Aorta (tissue), 5 donors: ENCODE measurements at regions of chr1 and their contacts with region 1.

Region 1: GRCh38 chr1:198096390-198096789 is 60.4 kb upstream of the NEK7 start:
- DNase-seq: no peak
- ATAC-seq: no peak
- H3K4me3 ChIP-seq: no peak overlapping the region
- H3K27ac ChIP-seq: no peak overlapping the region
- H3K4me1 ChIP-seq: no peaks in the 10 kb centered on the region
- H3K27me3 ChIP-seq: no peaks in the 10 kb centered on the region

Region 2: DNA sequence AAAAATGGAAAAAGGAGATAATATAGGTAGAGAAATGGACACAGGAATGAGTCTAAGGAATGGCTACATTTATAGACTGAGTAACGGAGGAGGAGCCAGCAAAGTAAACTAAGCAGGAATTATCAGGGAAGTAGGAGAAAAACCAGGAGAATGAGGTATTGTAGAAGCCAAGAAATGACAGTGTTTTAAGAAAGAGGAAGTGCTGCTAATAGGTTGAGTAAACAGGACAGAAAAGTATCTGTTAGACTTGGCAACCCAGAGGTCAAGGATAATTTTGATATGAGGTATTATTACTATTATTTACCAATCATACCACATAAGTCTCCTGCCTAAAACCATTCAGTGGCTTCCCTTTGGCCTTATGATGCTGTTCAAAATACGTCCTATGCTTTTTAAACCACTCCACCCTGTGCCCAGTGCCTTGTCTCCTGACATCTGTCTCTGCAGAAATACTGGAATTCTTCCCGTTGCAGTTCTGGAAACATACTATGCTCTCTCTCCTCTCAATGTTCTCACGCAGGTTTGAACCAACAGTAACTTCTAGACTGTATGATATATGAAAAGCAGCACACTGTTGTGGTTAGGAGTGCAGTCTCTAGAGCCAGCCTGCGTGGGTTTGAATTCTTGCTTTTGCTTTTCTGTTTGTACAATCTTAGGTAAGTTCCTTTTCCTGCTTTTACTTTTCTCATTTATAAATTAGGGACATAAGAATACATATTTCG is 35.8 kb after region 1 on chr1:
- intact Hi-C with region 1: no loop called
- DNase-seq: no peak
- ATAC-seq: no peak
- H3K4me3 ChIP-seq: no peak overlapping the region
- H3K27ac ChIP-seq: no peak overlapping the region
- H3K4me1 ChIP-seq: no peaks in the 10 kb centered on the region
- H3K27me3 ChIP-seq: no peaks in the 10 kb centered on the region

Region 3: DNA sequence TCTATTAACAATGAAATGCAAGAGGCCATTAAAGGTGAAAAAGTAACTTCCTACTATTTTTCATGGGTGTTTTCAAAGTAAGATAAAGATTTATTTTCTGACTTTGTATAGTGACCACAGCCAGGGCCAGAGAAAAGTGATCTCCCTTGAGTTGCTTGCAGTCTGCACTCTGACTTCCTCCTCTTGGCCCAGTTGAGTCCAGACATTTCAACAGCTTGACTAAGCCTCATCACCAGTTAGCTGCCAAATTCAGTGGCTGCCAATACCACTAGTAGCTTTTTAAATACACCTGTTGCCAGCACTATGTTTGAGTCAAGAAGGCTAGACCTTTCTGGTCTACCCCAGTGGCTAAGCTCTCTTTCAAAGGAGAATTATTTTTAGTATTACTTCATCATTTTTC is 56.7 kb after region 1 on chr1:
- intact Hi-C with region 1: no loop called
- DNase-seq: peak; percentile 68 to 78
- ATAC-seq: peak; percentile 31
- H3K4me3 ChIP-seq: no peak overlapping the region
- H3K27ac ChIP-seq: no peak overlapping the region
- H3K4me1 ChIP-seq: peaks cover 0 to 2% of the 10 kb centered on the region in 2 donors
- H3K27me3 ChIP-seq: no peaks in the 10 kb centered on the region

Region 4: GRCh38 chr1:198265073-198265661 is 168.8 kb after region 1 on chr1:
- intact Hi-C with region 1: loop called in 1 of 2 experiments (anchors 10 kb)
- DNase-seq: no peak
- ATAC-seq: no peak
- H3K4me3 ChIP-seq: no peak overlapping the region
- H3K27ac ChIP-seq: no peak overlapping the region
- H3K4me1 ChIP-seq: peaks cover 0 to 8% of the 10 kb centered on the region in 2 donors
- H3K27me3 ChIP-seq: no peaks in the 10 kb centered on the region